Heart left ventricle (tissue), 16 donors: ENCODE measurements at regions of chr19 and their contacts with region 1.

Region 1: GRCh38 chr19:850221-850978 is 1.7 kb upstream of the ELANE start:
- DNase-seq: peak; percentile 88 to 96 (median 94)
- ATAC-seq: peak; percentile 86 to 92 (median 92)
- H3K4me3 ChIP-seq: peak overlapping the region in 8 of 12 donors; percentile 0 to 26 (median 14)
- H3K27ac ChIP-seq: peak overlapping the region; percentile 1 to 90 (median 79)
- H3K4me1 ChIP-seq: peaks cover 0 to 30% (median 9%) of the 10 kb centered on the region in 12 donors
- H3K27me3 ChIP-seq: peaks cover 12 to 63% (median 24%) of the 10 kb centered on the region in 9 donors
- CTCF ChIP-seq: no peak
- POLR2A ChIP-seq: no peak

Region 2: GRCh38 chr19:778910-779653 is 71.3 kb before region 1 on chr19:
- intact Hi-C with region 1: loop called in 6 of 10 experiments (anchors 5 to 10 kb)
- DNase-seq: peak in 1 of 5 donors; percentile 64
- ATAC-seq: peak in 3 of 4 donors; percentile 54 to 72 (median 62)
- H3K4me3 ChIP-seq: peak overlapping the region in 6 of 12 donors; percentile 7 to 43 (median 20)
- H3K27ac ChIP-seq: peak overlapping the region in 10 of 12 donors; percentile 4 to 66 (median 49)
- H3K4me1 ChIP-seq: peaks cover 0 to 35% (median 10%) of the 10 kb centered on the region in 12 donors
- H3K27me3 ChIP-seq: peaks cover 0 to 4% (median 0%) of the 10 kb centered on the region in 9 donors
- CTCF ChIP-seq: peak in 1 of 12 donors; percentile 19
- POLR2A ChIP-seq: no peak

Region 3: GRCh38 chr19:1046836-1047695 is 196.7 kb after region 1 on chr19:
- intact Hi-C with region 1: no loop called
- DNase-seq: no peak
- ATAC-seq: no peak
- H3K4me3 ChIP-seq: no peak overlapping the region
- H3K27ac ChIP-seq: no peak overlapping the region
- H3K4me1 ChIP-seq: peaks cover 0 to 3% (median 0%) of the 10 kb centered on the region in 12 donors
- H3K27me3 ChIP-seq: no peaks in the 10 kb centered on the region
- CTCF ChIP-seq: no peak
- POLR2A ChIP-seq: no peak